Gastrocnemius medialis (tissue), 4 donors: ENCODE measurements at regions of chr11 and their contacts with region 1.

Region 1: GRCh38 chr11:11787305-11788062 is 54.3 kb upstream of the USP47 start:
- DNase-seq: peak; percentile 49 to 58
- ATAC-seq: peak; percentile 87 to 88
- H3K4me3 ChIP-seq: no peak overlapping the region
- H3K27ac ChIP-seq: no peak overlapping the region
- H3K4me1 ChIP-seq: peaks cover 5 to 12% of the 10 kb centered on the region in 2 donors
- H3K27me3 ChIP-seq: no peaks in the 10 kb centered on the region
- CTCF ChIP-seq: peak; percentile 84 to 88 (median 88)
- POLR2A ChIP-seq: no peak

Region 2: DNA sequence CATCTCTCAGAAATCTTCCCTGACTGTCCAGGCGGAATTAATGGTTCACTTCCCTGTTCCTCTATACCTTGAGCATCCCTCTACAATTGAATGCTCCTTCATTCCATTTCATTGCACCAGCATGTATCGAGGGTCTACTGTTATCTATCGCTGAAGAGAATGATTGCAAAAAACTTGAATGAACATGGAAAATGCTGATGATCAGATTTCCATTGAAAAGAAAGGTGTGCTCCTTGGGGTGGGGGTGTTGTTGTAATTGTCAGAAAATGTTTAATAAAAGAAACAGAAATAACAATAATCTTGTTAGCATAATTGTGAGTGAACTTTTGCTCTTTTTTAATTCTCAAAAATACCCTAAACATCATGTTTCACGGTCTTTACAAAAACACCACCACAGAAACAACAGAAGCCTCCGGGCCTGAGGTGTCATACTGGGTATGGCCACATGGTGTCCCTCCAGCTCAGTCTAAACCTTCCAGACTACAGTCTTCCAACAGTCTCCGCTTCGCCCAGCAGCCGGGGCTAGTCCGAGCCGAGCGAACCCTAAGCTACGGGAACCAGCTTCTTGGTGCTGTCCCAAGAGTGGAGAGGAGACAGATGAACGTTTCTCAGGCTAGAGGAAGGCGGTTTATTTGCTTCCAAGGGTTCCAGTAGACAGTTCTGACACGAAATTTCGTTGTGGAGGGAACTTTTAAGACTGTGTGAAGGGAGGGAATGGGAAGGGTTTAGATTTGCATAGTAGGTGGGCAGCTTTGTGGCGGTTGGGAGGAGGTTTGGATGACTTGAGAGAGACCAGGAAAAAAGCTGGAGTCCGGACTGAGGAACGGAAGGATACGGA is 853.8 kb before region 1 on chr11:
- in situ Hi-C with region 1: loop called (anchors 10 to 25 kb)
- intact Hi-C with region 1: loop called (anchors 5 kb)
- DNase-seq: peak; percentile 80 to 85
- ATAC-seq: peak; percentile 78 to 84
- H3K4me3 ChIP-seq: peak overlapping the region; percentile 45 to 65 (median 54)
- H3K27ac ChIP-seq: peak overlapping the region; percentile 64 to 84 (median 67)
- H3K4me1 ChIP-seq: peaks cover 6 to 7% of the 10 kb centered on the region in 2 donors
- H3K27me3 ChIP-seq: no peaks in the 10 kb centered on the region
- CTCF ChIP-seq: peak; percentile 92 to 98 (median 94)
- POLR2A ChIP-seq: no peak

Region 3: DNA sequence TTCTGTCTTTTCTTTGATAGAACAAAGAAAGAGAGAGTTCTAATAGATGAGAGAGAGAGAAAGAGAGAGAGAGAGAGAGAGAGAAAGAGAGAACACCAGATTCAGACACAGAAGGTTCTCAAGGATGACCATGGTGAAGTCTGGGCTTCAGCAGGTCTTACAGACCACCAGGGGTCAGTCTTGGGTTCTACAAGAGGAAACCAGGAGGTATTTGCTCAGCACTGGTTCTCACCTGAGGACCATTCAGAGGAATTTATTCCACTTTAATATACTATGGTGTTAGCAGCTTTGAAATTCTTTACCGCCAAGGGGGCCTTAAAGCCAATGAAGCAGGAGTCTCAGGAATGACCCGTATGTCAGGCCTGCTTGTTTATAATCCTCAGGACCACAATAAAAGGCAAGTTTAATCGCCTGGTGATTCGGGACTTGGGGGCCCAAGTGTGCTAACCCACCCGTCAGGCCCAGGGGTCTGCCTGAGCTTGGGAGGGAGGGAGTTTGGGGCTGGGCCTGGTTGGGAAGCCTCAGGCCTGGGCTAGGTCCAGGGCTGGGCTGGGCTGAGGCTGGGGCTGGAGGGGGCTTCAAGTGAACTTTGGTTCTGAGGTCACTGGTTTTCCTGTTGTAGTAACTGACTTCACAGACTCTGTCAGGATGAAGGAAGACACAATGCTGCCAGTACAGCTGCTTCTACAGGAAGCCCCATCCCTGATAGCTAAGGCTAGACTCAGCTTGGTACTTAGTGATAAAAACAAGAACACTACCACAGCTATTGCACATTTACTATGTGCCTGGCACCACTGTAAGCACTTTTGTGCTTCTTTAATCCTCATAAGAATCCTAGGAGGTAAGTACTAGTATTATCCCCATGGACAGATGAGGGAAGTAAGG is 750.4 kb before region 1 on chr11:
- in situ Hi-C with region 1: no loop called
- intact Hi-C with region 1: loop called (anchors 1 kb)
- DNase-seq: peak; percentile 27 to 39
- ATAC-seq: peak; percentile 65 to 78
- H3K4me3 ChIP-seq: no peak overlapping the region
- H3K27ac ChIP-seq: peak overlapping the region; percentile 42 to 88 (median 76)
- H3K4me1 ChIP-seq: peaks cover 22 to 26% of the 10 kb centered on the region in 2 donors
- H3K27me3 ChIP-seq: no peaks in the 10 kb centered on the region
- CTCF ChIP-seq: peak; percentile 70 to 79 (median 76)
- POLR2A ChIP-seq: no peak

Region 4: GRCh38 chr11:11400635-11401232 is 386.8 kb before region 1 on chr11:
- in situ Hi-C with region 1: loop called in 1 of 4 experiments (anchors 10 kb)
- intact Hi-C with region 1: loop called (anchors 10 kb)
- DNase-seq: no peak
- ATAC-seq: no peak
- H3K4me3 ChIP-seq: no peak overlapping the region
- H3K27ac ChIP-seq: no peak overlapping the region
- H3K4me1 ChIP-seq: peaks cover 9 to 24% of the 10 kb centered on the region in 2 donors
- H3K27me3 ChIP-seq: no peaks in the 10 kb centered on the region
- CTCF ChIP-seq: no peak
- POLR2A ChIP-seq: no peak

Region 5: GRCh38 chr11:11669233-11669846 is 118.1 kb before region 1 on chr11:
- in situ Hi-C with region 1: no loop called
- intact Hi-C with region 1: no loop called
- DNase-seq: no peak
- ATAC-seq: no peak
- H3K4me3 ChIP-seq: no peak overlapping the region
- H3K27ac ChIP-seq: no peak overlapping the region
- H3K4me1 ChIP-seq: no peaks in the 10 kb centered on the region
- H3K27me3 ChIP-seq: no peaks in the 10 kb centered on the region
- CTCF ChIP-seq: no peak
- POLR2A ChIP-seq: no peak

Region 6: DNA sequence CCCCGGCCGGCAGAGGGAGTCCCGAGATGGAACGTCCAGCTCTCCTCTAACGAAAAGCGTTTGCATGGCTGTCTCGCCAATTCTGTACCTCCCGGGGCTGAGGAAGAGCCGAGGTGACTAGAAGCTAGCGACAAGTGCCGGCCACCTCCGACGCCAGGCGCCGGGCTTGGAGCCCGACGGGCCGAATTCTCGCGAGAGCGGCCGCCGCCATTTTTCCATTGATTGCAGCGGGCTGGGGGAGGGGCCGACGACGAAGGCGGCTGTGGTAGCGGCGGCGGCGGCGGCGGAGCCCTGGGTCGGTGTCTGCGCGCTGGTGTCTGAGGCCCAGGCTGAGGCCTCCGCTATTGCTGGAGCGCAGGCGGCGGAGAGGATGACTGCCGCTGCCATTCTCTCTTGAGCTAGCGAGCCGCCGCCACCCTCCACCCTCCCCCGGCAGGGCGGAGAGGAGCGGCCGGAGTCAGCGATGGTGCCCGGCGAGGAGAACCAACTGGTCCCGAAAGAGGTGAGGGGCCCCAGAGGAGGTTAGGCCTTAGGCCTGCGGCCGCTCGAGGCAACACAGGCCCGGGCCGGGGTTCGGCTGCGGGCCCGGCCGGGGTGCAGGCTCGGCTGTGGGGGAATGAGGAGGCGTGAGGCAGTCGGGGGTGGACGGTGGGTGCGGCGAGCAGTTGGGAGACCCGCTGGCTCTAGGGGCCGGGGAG is 54.4 kb after region 1 on chr11 and contains the start of gene USP47:
- in situ Hi-C with region 1: no loop called
- intact Hi-C with region 1: no loop called
- DNase-seq: peak; percentile 78 to 89
- ATAC-seq: peak; percentile 68 to 74
- H3K4me3 ChIP-seq: peak within 1 kb of the TSS; percentile 93 to 99 (median 96)
- H3K27ac ChIP-seq: peak within 1 kb of the TSS; percentile 99 to 100 (median 99)
- H3K4me1 ChIP-seq: peaks cover 34 to 36% of the 10 kb centered on the region in 2 donors
- H3K27me3 ChIP-seq: no peaks in the 10 kb centered on the region
- CTCF ChIP-seq: peak; percentile 54 to 83 (median 73)
- POLR2A ChIP-seq: peak; percentile 88 to 91
- total RNA-seq, gene USP47: 84.4 to 222 (median 97.6) TPM

Region 7: DNA sequence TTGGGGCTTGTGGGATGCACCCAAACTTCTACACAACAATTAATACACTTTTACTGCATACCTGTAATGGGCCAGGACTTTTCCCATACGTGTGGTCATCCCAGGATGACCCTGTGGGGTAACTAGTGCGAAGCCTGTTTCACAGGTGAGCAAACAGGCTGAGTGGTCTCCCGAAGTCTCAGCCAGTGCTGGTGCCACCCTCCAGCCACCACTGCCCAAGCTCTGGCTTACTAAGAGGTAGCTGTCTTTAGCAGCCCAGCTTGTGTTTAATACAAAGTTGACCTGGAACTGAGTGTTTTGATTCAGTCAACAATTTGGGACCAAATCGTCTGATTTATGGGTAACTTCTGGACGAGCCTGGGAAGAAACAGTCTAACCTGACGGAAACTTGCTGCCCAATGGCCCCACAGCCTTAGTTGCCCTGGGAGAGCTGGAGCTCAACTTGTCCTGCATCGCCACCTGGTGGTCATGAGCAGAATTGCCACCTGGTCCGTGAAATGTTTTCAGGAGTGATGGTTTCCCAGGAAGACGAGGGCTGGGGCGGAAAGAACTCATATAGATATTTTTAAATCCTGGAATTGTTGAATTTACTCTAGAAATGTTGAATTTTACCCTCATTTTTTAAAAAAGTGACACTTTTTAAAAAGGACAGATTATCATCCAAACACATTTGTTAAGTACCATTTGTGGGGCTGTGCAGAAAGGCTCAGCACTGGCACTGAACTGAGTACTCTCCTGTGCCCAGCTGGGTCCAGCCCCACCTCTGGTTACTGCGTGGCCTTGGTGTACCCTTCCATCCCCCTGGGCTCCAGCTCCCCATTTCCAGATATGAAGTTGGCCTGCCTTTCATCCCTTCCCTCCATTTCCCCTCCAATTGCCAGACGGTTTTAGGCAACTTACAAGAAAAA is 494.3 kb after region 1 on chr11:
- in situ Hi-C with region 1: loop called in 1 of 4 experiments (anchors 25 kb)
- intact Hi-C with region 1: no loop called
- DNase-seq: peak; percentile 61 to 74
- ATAC-seq: peak; percentile 73 to 88
- H3K4me3 ChIP-seq: no peak overlapping the region
- H3K27ac ChIP-seq: no peak overlapping the region
- H3K4me1 ChIP-seq: peaks cover 3 to 4% of the 10 kb centered on the region in 2 donors
- H3K27me3 ChIP-seq: no peaks in the 10 kb centered on the region
- CTCF ChIP-seq: peak; percentile 95 to 97 (median 97)
- POLR2A ChIP-seq: no peak